ENCODE measurements at regions of chr2 and their contacts with region 1.

Region 1: GRCh38 chr2:37851828-37852584 is 73.1 kb upstream of the RMDN2 start:
- DNase-seq: no peak
- ATAC-seq: no peak
- H3K4me3 ChIP-seq: no peak overlapping the region
- H3K27ac ChIP-seq: no peak overlapping the region
- H3K4me1 ChIP-seq: no peaks in the 10 kb centered on the region
- H3K27me3 ChIP-seq: no peaks in the 10 kb centered on the region
- CTCF ChIP-seq: no peak

Region 2: DNA sequence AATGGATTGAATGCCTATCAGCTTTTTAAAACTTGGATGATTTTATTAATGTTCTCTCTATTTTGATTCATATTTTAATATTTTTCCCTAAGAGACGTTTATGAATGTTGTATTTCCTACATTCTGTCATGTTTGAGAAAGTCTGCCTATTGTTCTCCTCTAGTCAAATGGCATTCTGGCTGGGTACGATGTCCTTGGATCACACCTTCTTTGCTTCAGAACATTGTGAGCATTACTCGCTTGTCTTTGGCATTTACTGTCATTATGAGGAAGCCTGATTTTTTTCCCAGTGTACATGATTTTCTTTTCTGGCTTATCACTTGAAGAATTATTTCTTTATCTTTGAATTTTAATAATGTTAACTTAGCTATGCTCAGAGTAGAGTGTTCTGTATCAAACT is 259.0 kb before region 1 on chr2:
- CTCF ChIA-PET with region 1: interaction called, 15 read pairs
- POLR2A ChIA-PET with region 1: no interaction called
- intact Hi-C with region 1: no loop called
- DNase-seq: no peak
- ATAC-seq: no peak
- H3K4me3 ChIP-seq: no peak overlapping the region
- H3K27ac ChIP-seq: no peak overlapping the region
- H3K4me1 ChIP-seq: peaks cover 32% of the 10 kb centered on the region
- H3K27me3 ChIP-seq: no peaks in the 10 kb centered on the region
- CTCF ChIP-seq: no peak

Region 3: DNA sequence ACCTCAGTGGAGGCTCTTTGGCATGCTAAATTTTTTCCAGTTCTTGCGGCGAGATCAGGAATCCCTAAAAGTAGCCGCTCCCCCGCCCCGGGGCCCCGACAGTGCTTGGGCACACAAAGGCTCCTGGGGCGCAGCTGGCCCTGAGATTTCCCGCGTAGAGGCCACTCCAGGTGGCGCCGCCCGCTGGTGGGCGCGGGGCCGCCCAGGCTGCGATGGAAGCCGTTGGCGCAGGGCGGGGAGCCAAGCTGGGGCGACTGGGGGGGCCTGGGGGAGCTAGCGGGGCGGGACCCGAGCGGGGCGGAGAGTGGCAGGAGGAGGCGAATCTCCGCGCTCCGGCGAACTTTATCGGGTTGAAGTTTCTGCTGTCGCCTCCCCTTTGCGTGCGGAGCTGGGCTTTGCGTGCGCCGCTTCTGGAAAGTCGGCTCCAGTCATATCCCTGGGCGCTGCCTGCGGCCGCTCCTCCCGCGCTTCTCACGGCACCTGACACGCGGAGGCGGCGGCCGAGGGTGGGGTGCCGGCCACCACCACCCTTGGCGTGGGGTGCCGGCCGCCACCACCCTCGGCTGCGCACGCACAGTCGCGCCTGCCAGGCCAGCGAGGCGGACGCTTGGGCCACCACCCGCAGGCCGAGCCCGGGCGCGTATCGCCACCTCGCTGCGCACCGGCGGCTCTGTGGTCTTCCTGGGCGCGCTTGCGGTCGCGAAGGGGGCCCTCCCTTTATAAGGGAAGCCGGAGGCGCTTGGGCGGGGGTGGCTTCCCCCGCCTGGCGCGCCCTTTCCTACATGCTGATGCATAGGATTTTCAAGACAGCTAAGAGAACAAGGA is 224.8 kb after region 1 on chr2:
- CTCF ChIA-PET with region 1: no interaction called
- POLR2A ChIA-PET with region 1: no interaction called
- intact Hi-C with region 1: no loop called
- DNase-seq: peak; percentile 84
- ATAC-seq: peak; percentile 44
- H3K4me3 ChIP-seq: peak overlapping the region; percentile 69
- H3K27ac ChIP-seq: peak overlapping the region; percentile 85
- H3K4me1 ChIP-seq: peaks cover 27% of the 10 kb centered on the region
- H3K27me3 ChIP-seq: peaks cover 34% of the 10 kb centered on the region
- CTCF ChIP-seq: peak; percentile 65